Activated T-helper 2 cell treated with anti-CD3 and anti-CD28 coated beads, Interferon-gamma antibody, Interleukin-2, Interleukin-4, amounts not matched to agents 10 μg/mL and 5 μg/mL and 100 μg/mL, durations not matched to agents 14 hours and 24 hours and 36 hours (primary cell): ENCODE measurements at regions of chr7 and their contacts with region 1.

Region 1: DNA sequence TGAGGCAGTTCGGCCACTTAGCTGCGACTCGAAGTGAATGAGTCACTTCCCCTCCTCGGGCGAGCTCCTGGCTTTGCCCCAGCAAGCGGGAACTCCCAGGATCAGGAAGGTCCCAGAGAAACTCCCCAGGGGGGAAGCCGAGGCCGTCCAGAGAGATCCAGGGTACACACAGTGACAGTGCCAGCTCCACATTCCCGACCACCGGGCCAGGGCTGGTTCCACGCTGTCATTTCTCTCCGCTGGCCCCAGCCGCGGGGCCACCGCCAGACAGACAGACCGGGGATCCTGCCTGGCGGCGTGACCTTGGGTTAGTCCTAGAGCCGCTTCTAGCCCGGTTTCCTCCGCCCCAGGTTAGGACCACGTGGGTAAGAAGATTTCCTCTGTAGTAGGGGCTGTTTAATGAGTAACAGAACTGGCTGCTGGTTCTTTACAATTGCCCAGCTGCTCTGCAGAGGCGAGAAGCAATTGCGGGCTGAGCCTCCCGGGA is 463 bp upstream of the UPP1 start:
- DNase-seq: no peak
- H3K4me3 Mint-ChIP-seq: peak overlapping the region; percentile 71
- H3K27ac Mint-ChIP-seq: peak overlapping the region; percentile 91
- H3K4me1 Mint-ChIP-seq: peaks cover 65% of the 10 kb centered on the region
- H3K27me3 Mint-ChIP-seq: no peaks in the 10 kb centered on the region

Region 2: DNA sequence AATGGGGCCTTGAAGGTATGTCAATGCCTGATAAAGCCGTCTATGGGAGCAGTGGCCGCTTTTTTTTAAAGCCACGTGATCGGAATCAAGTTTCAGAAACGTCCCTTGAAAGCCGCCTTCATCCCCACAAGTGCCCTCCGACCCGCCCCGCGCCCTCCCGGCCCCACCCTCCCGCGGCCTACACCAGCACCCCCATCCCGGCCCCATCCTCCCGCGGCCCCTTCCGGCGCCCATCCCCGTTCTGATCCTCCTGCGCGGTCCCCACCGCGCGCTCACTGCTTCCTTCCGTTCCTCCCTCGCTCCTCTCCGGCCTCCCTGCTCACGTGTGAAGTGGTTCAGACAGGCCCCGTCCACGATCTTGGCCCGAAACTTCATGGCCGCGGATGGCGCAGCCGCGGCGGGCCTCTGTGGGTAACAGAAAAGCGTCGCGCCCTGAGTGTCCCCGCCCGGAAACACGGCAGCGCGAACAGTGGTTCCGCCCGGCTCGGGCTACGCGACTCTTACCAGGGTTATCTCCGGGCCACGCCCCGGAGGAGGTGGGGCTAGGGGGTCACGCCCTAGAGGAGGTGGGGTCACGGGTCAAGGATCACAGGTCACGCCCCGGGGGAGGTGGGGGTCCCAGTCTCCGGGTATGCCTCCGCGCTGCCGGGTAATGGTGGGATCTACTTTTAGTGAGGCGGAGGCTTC is 109.3 kb before region 1 on chr7 and contains the start of gene HUS1:
- intact Hi-C with region 1: loop called (anchors 1 kb)
- DNase-seq: peak; percentile 90
- H3K4me3 Mint-ChIP-seq: peak within 1 kb of the TSS; percentile 90
- H3K27ac Mint-ChIP-seq: peak within 1 kb of the TSS; percentile 95
- H3K4me1 Mint-ChIP-seq: peaks cover 14% of the 10 kb centered on the region
- H3K27me3 Mint-ChIP-seq: peaks cover 1% of the 10 kb centered on the region
- total RNA-seq, gene HUS1: 33.8 and 36.6 TPM in 2 replicates

Region 3: GRCh38 chr7:48035301-48035966 is 53.2 kb before region 1 on chr7 and contains the start of gene C7orf57:
- intact Hi-C with region 1: loop called (anchors 1 kb)
- DNase-seq: peak; percentile 83
- H3K4me3 Mint-ChIP-seq: peak within 1 kb of the TSS; percentile 76
- H3K27ac Mint-ChIP-seq: no peak within 1 kb of the TSS
- H3K4me1 Mint-ChIP-seq: peaks cover 9% of the 10 kb centered on the region
- H3K27me3 Mint-ChIP-seq: peaks cover 50% of the 10 kb centered on the region
- total RNA-seq, gene C7orf57: 0.11 and 0.18 TPM in 2 replicates

Region 4: GRCh38 chr7:48074204-48074654 is 14.4 kb before region 1 on chr7:
- intact Hi-C with region 1: loop called (anchors 2 kb)
- DNase-seq: no peak
- H3K4me3 Mint-ChIP-seq: no peak overlapping the region
- H3K27ac Mint-ChIP-seq: peak overlapping the region; percentile 18
- H3K4me1 Mint-ChIP-seq: peaks cover 20% of the 10 kb centered on the region
- H3K27me3 Mint-ChIP-seq: no peaks in the 10 kb centered on the region

Region 5: DNA sequence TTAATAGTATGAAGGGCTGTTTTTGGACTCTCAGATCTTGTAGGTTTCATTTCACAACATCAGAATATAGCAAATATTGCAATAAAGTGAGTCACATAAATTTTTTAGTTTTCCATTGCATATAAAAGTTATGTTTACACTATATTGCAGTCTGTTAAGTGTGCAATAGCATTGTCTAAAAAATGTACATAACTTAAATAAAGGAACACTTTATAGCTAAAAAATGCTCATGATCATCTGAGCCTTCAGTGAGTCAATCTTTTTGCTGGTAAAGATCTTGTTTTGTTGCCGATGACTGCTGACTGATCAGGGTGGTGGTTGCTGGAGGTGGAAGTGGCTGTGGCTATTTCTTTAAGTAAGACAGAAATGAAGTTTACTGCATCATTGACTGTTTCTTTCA is 124.6 kb after region 1 on chr7:
- intact Hi-C with region 1: no loop called
- DNase-seq: no peak
- H3K4me3 Mint-ChIP-seq: no peak overlapping the region
- H3K27ac Mint-ChIP-seq: no peak overlapping the region
- H3K4me1 Mint-ChIP-seq: no peaks in the 10 kb centered on the region
- H3K27me3 Mint-ChIP-seq: peaks cover 28% of the 10 kb centered on the region

Region 6: DNA sequence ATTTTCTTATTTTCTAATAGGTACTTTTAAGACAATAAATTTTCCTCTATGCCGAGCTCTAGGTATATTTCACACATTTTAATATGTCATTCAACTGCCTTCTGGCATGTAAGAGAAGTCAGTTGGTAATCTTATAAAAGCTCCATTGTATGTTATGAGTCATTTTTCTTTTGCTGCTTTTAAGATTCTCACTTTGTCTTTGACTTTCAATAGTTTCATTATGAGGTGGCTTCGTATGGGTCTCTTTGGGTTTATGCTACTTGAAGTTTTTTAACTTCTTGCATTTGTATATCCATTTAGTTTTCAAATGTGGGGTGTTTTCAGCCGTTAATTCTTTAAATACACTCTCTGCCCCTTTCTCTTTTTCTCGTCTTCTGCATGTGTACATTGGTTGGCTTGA is 163.2 kb after region 1 on chr7:
- intact Hi-C with region 1: loop called (anchors 1 kb)
- DNase-seq: no peak
- H3K4me3 Mint-ChIP-seq: no peak overlapping the region
- H3K27ac Mint-ChIP-seq: peak overlapping the region; percentile 26
- H3K4me1 Mint-ChIP-seq: peaks cover 30% of the 10 kb centered on the region
- H3K27me3 Mint-ChIP-seq: peaks cover 3% of the 10 kb centered on the region